ENCODE measurements at regions of chr5 and their contacts with region 1.

Region 1: DNA sequence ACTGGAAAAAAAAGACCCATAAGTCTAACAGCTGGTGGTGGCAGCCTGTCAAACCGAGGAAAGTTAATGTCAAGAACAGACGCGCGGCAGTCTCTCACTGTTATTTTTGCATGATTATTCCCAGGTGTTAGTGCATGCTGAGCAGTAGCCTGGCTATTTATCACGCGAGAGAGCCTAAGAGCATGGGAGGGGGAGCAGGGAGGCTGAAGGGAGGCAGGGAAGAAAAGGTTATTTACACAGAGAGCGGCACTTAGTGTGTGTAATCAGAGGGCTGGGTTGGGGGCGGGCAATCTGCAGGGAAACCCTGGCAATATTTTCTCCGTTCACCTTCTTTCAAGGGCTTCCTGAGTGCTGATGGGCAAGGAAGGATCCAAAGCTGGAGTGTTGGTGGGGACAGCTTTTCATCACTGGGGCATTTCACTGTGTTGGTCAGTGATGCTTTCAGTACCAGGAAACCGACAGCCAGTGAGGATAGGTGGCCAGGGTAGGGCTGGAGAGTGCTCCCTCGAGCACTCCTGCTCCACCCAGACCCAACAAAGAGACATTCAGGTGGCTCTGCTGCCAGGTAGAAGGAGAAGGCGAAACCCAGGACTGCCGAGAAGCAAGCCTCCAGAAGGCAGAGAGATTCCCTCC is 39.6 kb downstream of the ZNF608 start:
- DNase-seq: peak; percentile 77

Region 2: DNA sequence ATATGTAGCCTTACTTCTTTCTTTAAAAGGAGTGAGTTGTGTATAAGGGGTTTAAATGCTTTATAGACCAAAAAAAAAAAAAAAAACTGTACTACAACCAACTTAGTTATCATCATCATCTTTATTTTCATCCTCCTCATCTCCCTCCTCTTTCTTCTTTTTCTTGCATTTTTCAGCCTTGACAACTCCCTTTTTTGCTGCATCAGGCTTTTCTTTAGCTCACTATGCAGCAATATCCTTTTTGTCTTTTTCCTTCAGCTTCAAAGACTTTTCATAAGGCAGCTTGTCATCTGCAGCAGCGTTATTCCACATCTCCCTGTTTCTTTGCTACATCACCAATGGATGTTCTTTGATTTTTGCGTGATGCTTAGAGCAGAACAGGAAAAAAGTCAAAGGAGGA is 486.4 kb before region 1 on chr5:
- intact Hi-C with region 1: no loop called
- DNase-seq: no peak

Region 3: DNA sequence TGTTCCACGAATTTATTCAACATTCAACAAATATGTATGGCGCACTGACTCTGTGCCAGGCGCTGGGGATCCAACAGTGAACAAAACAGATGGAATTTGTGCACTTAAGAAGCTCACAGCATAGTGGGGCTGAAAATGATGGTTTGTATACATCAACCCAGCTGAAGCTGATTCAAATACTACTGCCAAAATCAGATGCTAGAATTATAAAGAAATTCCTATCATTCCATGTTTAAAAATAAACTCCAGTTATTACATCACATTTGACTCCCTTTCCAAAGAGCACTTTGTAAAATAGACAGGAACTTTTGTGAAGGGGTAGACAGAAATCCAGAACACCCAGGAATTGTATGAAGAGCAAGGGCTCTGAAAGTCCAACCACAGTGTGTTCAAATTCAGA is 14.5 kb before region 1 on chr5:
- intact Hi-C with region 1: no loop called
- DNase-seq: no peak

Region 4: DNA sequence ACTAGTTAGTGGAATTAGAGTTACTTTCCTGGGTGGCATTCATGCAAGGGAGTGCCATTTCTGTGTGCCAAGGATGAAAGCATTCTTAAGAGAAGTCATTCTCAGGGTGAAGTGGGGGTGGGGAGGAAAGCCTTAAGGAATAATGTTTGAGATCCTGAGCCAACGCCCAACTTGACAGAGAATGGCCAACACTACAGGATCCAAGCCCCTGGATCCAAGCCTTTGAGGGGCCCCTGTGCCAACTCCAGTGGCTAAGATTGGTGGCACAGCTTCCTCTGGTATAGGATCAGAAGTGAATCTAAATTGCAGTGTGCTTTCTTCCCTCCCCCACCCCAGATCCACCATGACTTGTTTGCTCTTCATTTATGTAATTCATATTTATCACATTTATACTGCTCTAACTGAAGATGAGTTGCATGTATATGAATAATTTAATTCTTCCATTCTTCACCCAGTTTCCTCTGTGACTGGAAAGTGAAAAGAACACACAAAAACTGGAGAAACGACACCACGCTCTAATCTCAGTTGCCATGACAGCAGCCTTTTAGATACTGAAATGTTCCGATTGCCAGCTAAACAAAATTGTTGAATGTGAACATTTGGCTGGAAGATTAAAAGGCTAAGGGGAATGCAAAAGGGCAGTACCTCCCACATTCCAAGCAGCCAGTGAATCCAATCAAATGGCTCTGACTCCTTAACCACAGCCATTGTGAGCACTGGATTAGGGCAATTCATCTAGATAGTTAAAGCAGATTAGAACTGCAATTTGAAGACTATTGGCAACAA is 35.1 kb after region 1 on chr5:
- intact Hi-C with region 1: loop called (anchors 5 kb)
- DNase-seq: no peak

Region 5: GRCh38 chr5:125002727-125003598 is 296.1 kb after region 1 on chr5:
- intact Hi-C with region 1: no loop called
- DNase-seq: no peak

Measured in cardiac septum (tissue), 1 donor.